GM10248 (cell line): ENCODE measurements at regions of chr9 and their contacts with region 1.

Region 1: DNA sequence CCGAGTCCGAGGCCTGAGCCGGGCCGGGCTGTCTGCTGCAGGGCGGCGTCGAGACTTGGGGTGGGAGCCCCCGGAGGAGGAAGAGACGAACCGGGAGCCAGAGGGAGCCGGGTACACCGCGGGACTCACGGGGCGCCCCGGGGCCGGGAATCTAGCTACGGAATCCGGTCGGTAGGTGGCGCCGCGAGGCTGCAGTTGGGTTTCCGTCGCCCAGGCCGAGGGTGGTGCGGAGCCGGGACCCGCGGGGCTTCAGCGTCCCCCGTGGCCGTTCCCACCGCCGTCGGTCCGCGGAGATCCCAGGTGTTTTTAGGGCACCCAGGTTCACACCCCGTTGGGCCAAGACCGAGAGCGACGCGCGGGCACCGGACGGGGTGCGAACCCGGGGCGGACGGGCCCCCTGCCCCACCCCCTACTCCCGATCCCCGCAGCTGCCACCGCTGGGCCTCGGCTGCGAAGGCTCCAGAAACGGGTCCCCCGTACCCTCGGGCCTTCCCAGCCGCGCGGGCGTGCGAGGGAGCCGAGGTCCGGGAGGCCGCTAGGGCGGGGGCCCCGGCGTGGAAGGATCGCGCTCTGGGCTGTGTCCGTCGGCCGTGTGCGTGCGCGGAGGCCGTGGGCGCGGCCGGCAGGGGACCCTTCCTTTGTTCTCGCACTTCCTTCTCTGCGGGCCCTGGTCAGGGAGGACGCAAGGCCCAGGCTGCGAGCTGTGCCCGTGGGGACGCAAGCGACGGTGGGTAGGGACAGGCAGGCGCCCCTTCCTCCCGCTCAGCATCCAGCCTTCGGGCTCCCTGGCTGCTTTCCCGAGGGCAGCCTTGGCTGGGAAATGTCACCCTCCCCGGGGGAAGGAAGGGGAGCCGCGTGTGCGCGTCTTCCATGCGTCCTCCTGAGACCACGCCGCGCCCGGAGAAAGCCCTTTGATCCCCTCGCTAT is 146.6 kb downstream of the GAPVD1 start:
- DNase-seq: peak; percentile 92
- CTCF ChIP-seq: peak; percentile 88

Region 2: DNA sequence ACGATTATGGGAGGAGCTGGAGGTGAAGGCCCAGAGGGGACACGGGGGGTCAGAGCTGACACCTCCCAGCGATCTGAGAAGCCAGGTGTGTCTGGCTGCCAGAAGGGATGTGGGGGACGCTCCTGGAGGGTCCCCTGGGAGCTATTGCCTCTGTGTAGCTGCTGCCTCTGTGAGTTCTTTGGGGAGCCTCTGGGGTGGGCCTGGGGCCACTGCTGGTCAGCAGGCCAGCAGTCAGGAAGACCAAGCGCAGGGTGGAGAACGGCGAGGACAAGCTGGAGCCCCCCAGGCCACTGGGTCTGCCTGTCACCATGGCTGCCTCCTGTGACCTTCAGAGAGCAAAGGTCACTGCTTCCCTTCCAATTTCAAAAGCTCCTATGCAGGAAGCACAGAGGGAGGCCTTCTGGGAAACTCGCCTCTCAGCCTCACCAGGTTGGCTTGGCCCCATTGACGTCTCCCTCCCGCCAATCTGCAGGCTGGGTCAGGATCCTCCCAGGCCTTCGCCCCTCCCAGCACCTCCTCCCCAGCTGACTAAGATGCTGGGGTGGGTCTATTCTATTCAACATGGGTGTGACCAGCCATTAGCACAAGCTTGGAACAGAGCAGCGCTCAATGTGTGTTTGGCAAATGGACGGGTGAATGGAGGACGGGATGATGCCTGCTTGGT is 20.2 kb before region 1 on chr9:
- CTCF ChIA-PET with region 1: interaction called, 12 read pairs
- POLR2A ChIA-PET with region 1: no interaction called
- DNase-seq: no peak
- CTCF ChIP-seq: no peak

Region 3: DNA sequence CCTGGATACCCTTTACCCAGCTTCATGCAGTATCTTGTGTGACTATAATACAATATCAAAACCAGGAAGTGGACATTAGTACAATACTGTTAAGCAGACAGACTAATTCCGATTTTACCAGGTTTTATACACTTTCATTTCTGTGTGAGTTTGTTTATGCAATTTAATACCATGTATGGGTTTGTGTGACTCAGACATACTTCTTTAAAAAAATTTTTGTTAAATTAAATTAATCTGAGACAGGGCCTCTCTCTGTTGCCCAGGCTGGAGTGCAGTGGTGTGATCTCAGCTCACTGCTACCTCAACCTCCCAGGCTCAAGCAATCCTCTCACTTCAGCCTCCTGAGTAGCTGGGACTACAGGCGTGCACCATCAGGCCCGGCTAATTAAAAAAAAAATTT is 10.2 kb after region 1 on chr9:
- CTCF ChIA-PET with region 1: interaction called, 17 read pairs
- POLR2A ChIA-PET with region 1: no interaction called
- DNase-seq: no peak
- CTCF ChIP-seq: no peak

Region 4: DNA sequence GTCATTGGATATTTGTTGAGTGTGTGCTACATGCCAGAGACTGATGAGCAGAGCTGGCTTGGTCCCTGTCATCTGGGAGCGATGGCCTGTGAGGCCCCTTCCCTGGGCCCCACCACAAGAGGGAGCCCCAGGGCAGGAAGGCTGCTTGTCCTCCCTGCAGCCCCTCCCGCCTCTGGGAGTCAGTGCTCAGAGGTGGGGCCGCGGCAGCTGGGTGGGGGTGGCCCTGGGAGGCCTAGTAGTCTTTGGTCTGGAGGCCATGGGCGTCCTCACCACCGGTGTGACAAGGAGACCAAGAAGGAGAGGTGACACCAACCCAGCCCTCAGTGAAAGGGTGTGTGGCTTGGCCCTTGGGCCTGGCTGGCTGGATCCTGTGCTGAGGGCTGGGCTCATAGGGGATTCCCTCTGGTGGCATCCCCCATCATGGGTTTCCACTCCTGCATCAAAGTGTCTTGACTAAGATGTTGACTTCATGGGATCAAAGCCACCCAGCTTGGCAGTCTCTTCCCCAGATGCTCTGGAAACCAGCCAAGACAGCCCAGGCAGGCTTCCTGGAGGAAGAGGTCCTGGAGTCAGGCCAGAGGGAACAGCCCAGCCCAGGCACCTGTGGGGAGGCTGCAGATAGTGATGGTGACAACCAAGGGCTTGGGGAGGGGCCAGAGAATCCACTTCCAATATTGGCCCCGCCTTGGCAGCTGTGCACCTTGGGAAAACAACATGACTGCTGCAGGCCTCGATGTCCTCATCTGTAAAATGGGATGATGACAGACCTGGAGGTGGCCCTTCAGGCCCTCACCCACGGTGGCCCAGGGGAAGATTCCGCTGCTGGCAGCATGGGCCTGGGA is 20.0 kb after region 1 on chr9:
- CTCF ChIA-PET with region 1: interaction called, 13 read pairs
- POLR2A ChIA-PET with region 1: no interaction called
- DNase-seq: peak; percentile 76
- CTCF ChIP-seq: peak; percentile 58

Region 5: GRCh38 chr9:125495172-125496092 is 87.2 kb after region 1 on chr9:
- CTCF ChIA-PET with region 1: no interaction called
- POLR2A ChIA-PET with region 1: no interaction called
- DNase-seq: peak; percentile 47
- CTCF ChIP-seq: no peak

Region 6: DNA sequence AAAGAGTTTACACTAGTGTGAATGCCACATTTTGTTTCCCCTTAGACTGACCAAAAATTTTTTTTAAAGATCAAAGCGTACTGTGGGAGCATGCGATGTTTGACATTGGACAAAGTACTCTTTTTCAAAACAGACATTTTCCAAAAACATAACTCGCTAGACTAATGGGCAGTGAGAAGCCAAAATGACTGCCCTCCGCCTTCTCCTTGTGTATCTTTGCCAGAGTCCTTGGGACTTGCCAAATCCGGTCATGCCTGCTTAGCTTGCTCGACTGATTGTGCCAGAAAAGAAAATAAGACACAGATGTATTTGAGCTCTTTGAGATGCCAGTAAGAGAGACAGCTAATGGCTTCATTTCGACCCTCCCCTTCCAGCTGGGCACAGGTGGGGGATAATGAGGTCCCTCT is 141.2 kb after region 1 on chr9:
- CTCF ChIA-PET with region 1: no interaction called
- POLR2A ChIA-PET with region 1: no interaction called
- DNase-seq: no peak
- CTCF ChIP-seq: no peak

Region 7: GRCh38 chr9:125612616-125613540 is 204.6 kb after region 1 on chr9:
- CTCF ChIA-PET with region 1: no interaction called
- POLR2A ChIA-PET with region 1: no interaction called
- DNase-seq: no peak
- CTCF ChIP-seq: no peak

Region 8: DNA sequence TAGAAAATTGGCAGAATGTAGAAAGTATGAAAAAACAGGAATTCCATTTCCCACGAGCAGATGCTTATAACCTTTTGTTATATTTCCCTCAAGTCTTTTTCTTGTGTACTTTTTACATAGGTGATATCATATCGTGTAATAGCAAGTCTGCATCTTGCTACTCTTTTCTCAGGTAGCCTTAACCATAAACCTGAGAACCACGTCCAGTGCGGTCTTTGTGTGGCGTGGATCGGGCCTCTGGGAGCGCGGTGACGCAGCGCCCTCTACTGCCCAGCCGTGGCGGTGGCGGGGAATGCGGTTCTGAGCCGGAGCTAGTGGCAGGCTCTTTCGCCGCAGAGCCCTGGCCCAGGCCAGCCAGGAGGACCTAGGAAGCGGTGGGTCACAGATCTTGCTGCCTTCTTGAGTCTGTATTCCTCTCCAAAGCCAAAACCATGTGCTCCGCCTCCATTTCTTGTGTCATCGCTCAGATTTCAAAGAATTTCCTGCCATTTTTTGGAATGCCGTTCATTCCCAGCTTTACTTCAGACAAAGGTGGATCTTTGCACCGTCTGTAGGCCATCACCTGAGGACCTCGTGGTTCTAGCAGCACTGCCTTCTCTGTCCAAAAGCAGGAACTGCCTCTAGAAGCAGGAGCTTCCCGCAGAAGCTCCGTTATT is 990.3 kb after region 1 on chr9:
- CTCF ChIA-PET with region 1: interaction called, 29 read pairs
- POLR2A ChIA-PET with region 1: no interaction called
- DNase-seq: peak; percentile 83
- CTCF ChIP-seq: peak; percentile 93